ENCODE measurements at regions of chr17 and their contacts with region 1.

Region 1: GRCh38 chr17:47663912-47664625 is 14.3 kb downstream of the KPNB1 start:
- DNase-seq: peak; percentile 39 to 84 (median 52)
- ATAC-seq: peak; percentile 65
- H3K4me3 ChIP-seq: no peak overlapping the region
- H3K4me3 Mint-ChIP-seq: no peak overlapping the region
- H3K27ac ChIP-seq: no peak overlapping the region
- H3K27ac Mint-ChIP-seq: peak overlapping the region; percentile 57
- H3K4me1 ChIP-seq: peaks cover 18% of the 10 kb centered on the region
- H3K4me1 Mint-ChIP-seq: peaks cover 21% of the 10 kb centered on the region
- H3K27me3 ChIP-seq: no peaks in the 10 kb centered on the region
- H3K27me3 Mint-ChIP-seq: no peaks in the 10 kb centered on the region
- CTCF ChIP-seq: peak; percentile 90

Region 2: DNA sequence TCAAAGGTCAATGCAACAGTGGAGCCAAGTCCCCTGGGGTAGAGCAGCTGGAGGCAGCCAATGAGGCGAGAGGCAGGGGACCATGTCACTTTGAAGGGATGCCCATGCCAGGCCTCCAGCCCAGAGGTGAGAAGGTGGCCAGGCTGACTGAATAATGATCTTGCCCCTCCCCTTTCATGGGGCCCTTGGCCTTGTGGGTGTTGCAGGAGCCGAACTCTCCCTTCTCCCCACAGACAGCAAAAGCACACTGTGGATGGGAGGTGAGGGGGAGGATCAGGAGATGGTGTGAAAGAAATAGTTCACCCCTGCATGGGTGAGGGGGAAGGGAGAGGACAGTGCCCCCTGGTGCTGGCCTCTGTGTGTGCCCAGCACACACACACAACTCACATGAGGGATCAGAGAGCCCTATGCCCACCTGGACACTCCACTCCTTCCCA is 53.2 kb after region 1 on chr17:
- CTCF ChIA-PET with region 1: no interaction called
- POLR2A ChIA-PET with region 1: interaction called, 5 read pairs
- intact Hi-C with region 1: loop called in 1 of 2 experiments (anchors 1 kb)
- DNase-seq: peak in 3 of 14 experiments; percentile 22 to 61 (median 40)
- ATAC-seq: peak; percentile 37
- H3K4me3 ChIP-seq: no peak overlapping the region
- H3K4me3 Mint-ChIP-seq: no peak overlapping the region
- H3K27ac ChIP-seq: no peak overlapping the region
- H3K27ac Mint-ChIP-seq: no peak overlapping the region
- H3K4me1 ChIP-seq: peaks cover 99% of the 10 kb centered on the region
- H3K4me1 Mint-ChIP-seq: peaks cover 68% of the 10 kb centered on the region
- H3K27me3 ChIP-seq: peaks cover 0 to 6% of the 10 kb centered on the region in 2 experiments
- H3K27me3 Mint-ChIP-seq: peaks cover 15% of the 10 kb centered on the region
- CTCF ChIP-seq: peak; percentile 43

Region 3: DNA sequence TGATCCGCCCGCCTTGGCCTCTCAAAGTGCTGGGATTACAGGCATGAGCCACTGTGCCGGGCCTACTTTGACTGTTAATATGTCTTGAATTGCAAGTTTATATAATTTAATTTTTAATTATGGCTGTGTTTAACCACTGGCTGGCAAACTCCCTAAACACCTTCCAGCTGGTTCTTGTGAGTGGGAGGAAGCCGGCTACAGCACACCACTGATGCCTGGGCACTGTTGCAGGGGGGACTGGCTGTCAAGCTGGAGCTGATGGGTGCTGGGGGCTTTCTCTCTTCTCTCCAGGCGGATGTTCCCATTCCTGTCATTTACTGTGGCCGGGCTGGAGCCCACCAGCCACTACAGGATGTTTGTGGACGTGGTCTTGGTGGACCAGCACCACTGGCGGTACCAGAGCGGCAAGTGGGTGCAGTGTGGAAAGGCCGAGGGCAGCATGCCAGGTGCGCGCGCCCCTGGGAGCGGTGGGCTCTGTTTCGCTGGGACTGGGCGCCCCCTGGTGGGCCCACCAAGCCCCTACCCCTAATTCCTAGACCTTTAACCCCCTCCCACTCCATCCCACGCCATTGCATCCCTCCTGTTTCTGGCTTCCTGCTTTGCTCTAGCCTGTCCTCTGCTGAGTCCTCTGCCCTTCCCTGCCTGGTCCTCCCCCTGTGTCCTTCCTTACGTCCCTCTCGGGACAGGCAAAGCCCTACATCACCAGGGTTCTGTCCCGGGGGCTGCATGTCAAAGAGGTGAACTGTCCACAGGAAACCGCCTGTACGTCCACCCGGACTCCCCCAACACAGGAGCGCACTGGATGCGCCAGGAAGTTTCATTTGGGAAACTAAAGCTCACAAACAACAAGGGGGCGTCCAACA is 78.5 kb after region 1 on chr17:
- CTCF ChIA-PET with region 1: interaction called, 3 read pairs
- POLR2A ChIA-PET with region 1: no interaction called
- intact Hi-C with region 1: loop called (anchors 1 kb)
- DNase-seq: peak in 12 of 14 experiments; percentile 23 to 73 (median 44)
- ATAC-seq: peak; percentile 67
- H3K4me3 ChIP-seq: no peak overlapping the region
- H3K4me3 Mint-ChIP-seq: no peak overlapping the region
- H3K27ac ChIP-seq: no peak overlapping the region
- H3K27ac Mint-ChIP-seq: no peak overlapping the region
- H3K4me1 ChIP-seq: peaks cover 54% of the 10 kb centered on the region
- H3K4me1 Mint-ChIP-seq: peaks cover 12% of the 10 kb centered on the region
- H3K27me3 ChIP-seq: no peaks in the 10 kb centered on the region
- H3K27me3 Mint-ChIP-seq: no peaks in the 10 kb centered on the region
- CTCF ChIP-seq: peak; percentile 60

Region 4: GRCh38 chr17:47802341-47803022 is 138.4 kb after region 1 on chr17:
- CTCF ChIA-PET with region 1: interaction called, 4 read pairs
- POLR2A ChIA-PET with region 1: no interaction called
- intact Hi-C with region 1: loop called (anchors 1 kb)
- DNase-seq: peak; percentile 37 to 74 (median 47)
- ATAC-seq: peak; percentile 97
- H3K4me3 ChIP-seq: no peak overlapping the region
- H3K4me3 Mint-ChIP-seq: no peak overlapping the region
- H3K27ac ChIP-seq: no peak overlapping the region
- H3K27ac Mint-ChIP-seq: no peak overlapping the region
- H3K4me1 ChIP-seq: peaks cover 5% of the 10 kb centered on the region
- H3K4me1 Mint-ChIP-seq: no peaks in the 10 kb centered on the region
- H3K27me3 ChIP-seq: no peaks in the 10 kb centered on the region
- H3K27me3 Mint-ChIP-seq: peaks cover 2% of the 10 kb centered on the region
- CTCF ChIP-seq: peak; percentile 66

Region 5: DNA sequence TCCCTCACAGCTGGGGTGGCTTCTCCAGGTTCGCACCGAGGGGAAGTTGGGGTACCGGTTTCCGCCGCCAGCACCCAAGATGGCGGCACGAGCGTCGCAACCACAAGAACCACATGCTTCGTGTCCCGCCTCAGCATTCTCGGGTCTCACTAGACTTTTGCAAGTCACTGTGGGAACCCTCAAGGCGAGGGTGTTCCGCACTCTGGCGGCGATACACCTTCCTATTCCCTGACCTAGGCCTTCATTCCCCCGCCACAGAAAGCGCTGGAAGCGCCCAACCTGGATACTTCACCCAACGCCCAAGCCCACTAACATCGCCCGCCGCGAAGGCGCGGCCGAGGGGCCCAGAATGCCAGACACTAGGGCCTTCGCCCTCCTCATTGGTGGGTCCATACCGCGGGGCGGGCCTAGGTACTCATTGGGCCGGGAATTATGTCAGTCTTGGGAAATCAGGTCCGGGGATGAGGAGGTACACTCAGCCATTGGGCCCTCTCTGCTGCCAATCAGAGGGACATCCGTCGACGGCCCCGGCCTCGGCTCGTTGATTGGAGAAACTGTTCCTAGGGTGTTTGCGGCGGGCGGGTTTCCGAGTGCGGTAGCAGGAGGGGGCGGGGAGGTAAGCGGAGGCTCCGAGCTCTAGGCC is 383.8 kb after region 1 on chr17 and contains the start of gene NFE2L1:
- CTCF ChIA-PET with region 1: no interaction called
- POLR2A ChIA-PET with region 1: no interaction called
- intact Hi-C with region 1: no loop called
- DNase-seq: peak; percentile 92 to 100 (median 96)
- ATAC-seq: peak; percentile 96
- H3K4me3 ChIP-seq: peak within 1 kb of the TSS; percentile 81
- H3K4me3 Mint-ChIP-seq: peak within 1 kb of the TSS; percentile 93
- H3K27ac ChIP-seq: peak within 1 kb of the TSS; percentile 82 to 91
- H3K27ac Mint-ChIP-seq: peak within 1 kb of the TSS; percentile 94
- H3K4me1 ChIP-seq: peaks cover 55% of the 10 kb centered on the region
- H3K4me1 Mint-ChIP-seq: peaks cover 58% of the 10 kb centered on the region
- H3K27me3 ChIP-seq: no peaks in the 10 kb centered on the region
- H3K27me3 Mint-ChIP-seq: no peaks in the 10 kb centered on the region
- CTCF ChIP-seq: no peak
- total RNA-seq, gene NFE2L1: 28.1 to 30.6 TPM

Measured in CD4-positive, alpha-beta T cell (primary cell).